H1 (cell line): ENCODE measurements at regions of chr2 and their contacts with region 1.

Region 1: DNA sequence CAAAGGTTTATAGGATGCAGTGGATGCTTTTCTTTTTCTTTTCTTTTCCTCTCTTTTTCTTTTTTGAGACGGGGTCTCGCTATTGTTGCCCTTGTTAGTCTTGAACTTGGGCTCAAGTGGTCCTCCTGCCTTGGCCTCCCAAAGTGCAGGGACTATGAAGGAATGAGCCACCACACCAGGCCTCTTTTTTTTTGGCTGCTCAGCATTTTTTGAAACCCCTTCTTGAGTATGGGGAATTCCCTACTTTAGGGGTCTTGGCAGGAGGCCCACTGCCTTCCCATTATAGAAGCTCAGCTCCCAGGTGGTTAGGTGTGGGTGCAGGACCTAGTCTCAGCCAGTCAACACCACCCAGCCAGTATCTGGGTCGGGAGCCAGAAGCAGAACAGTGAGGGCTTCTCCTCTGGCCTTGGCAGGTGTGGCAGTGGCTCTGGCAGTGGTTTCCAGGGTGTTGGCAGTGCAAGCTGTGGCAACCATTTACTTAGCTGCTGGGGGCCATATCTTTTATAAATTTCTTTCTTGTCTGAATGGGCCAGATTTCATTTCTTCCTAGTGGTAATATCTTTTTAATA is 51.4 kb upstream of the ACYP2 start:
- DNase-seq: no peak
- H3K4me3 ChIP-seq: no peak overlapping the region
- H3K27ac ChIP-seq: no peak overlapping the region
- H3K4me1 ChIP-seq: no peaks in the 10 kb centered on the region
- H3K27me3 ChIP-seq: no peaks in the 10 kb centered on the region
- CTCF ChIP-seq: no peak
- EP300 ChIP-seq: no peak
- POLR2A ChIP-seq: no peak
- RAD21 ChIP-seq: no peak

Region 2: GRCh38 chr2:54052825-54053718 is 11.0 kb before region 1 on chr2:
- CTCF ChIA-PET with region 1: interaction called, 11 read pairs
- POLR2A ChIA-PET with region 1: no interaction called
- DNase-seq: no peak
- H3K4me3 ChIP-seq: no peak overlapping the region
- H3K27ac ChIP-seq: no peak overlapping the region
- H3K4me1 ChIP-seq: no peaks in the 10 kb centered on the region
- H3K27me3 ChIP-seq: no peaks in the 10 kb centered on the region
- CTCF ChIP-seq: peak in 2 of 3 experiments; percentile 43 to 54; a peak in 2 of 4 replicates
- EP300 ChIP-seq: no peak
- POLR2A ChIP-seq: no peak
- RAD21 ChIP-seq: peak; percentile 54 to 59